AG04449 (cell line): ENCODE measurements at regions of chr1 and their contacts with region 1.

Region 1: GRCh38 chr1:150072959-150073358 is 5.4 kb downstream of the VPS45 start:
- DNase-seq: no peak
- H3K4me3 ChIP-seq: no peak overlapping the region
- CTCF ChIP-seq: no peak

Region 2: GRCh38 chr1:149899460-149900293 is 173.3 kb before region 1 on chr1 and contains the start of gene BOLA1:
- CTCF ChIA-PET with region 1: no interaction called
- POLR2A ChIA-PET with region 1: no interaction called
- DNase-seq: no peak
- H3K4me3 ChIP-seq: peak within 1 kb of the TSS; percentile 66
- CTCF ChIP-seq: no peak

Region 3: GRCh38 chr1:149978547-149979023 is 94.4 kb before region 1 on chr1:
- CTCF ChIA-PET with region 1: no interaction called
- POLR2A ChIA-PET with region 1: no interaction called
- DNase-seq: no peak
- H3K4me3 ChIP-seq: no peak overlapping the region
- CTCF ChIP-seq: no peak

Region 4: GRCh38 chr1:150092180-150092791 is 19.3 kb after region 1 on chr1:
- CTCF ChIA-PET with region 1: interaction called, 11 read pairs
- POLR2A ChIA-PET with region 1: interaction called, 3 read pairs
- DNase-seq: no peak
- H3K4me3 ChIP-seq: no peak overlapping the region
- CTCF ChIP-seq: no peak

Region 5: DNA sequence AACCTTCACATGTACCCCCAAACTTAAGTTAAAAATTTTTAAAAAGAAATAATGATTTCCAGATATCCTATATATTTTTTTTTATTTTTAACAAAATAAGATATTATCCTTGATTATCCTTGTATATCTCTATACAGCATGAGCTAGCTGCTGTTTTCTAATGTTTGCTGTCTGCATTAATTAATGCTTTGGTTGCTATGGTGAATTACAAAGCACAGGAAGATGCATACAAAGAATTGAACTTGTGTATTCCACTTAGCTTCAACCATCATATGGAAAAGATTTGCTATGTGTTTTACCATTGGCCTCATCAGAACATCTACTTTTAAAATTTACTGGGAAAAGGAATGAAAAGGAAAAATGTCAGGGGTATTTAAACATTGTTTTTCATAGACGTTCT is 30.0 kb after region 1 on chr1:
- CTCF ChIA-PET with region 1: interaction called, 12 read pairs
- POLR2A ChIA-PET with region 1: no interaction called
- DNase-seq: no peak
- H3K4me3 ChIP-seq: no peak overlapping the region
- CTCF ChIP-seq: no peak

Region 6: GRCh38 chr1:150149271-150150132 is 76.5 kb after region 1 on chr1 and contains the start of gene PLEKHO1:
- CTCF ChIA-PET with region 1: interaction called, 14 read pairs
- POLR2A ChIA-PET with region 1: interaction called, 4 read pairs
- DNase-seq: no peak
- H3K4me3 ChIP-seq: peak within 1 kb of the TSS; percentile 77
- CTCF ChIP-seq: no peak

Region 7: GRCh38 chr1:150162862-150163706 is 90.1 kb after region 1 on chr1:
- CTCF ChIA-PET with region 1: interaction called, 486 read pairs
- POLR2A ChIA-PET with region 1: no interaction called
- DNase-seq: peak; percentile 99
- H3K4me3 ChIP-seq: peak overlapping the region; percentile 29; the same call in 1 of the 2 replicates
- CTCF ChIP-seq: no peak

Region 8: DNA sequence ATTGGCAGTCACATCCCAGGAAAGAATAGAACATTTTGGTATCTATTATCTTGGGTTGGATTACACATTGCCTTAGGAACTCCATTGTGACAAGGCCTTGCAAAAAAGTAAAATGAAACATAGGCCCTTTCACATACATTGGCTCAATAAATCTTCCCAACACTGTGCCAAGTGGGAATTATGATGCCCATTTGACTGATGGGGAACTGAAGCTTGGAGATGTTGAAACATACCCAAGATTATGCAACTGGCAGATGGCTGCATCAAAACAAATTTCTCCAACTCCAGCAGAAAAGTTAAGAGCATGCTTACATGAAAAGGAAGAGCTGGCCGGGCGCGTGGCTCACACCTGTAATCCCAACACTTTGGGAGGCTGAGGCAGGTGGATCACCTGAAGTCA is 103.6 kb after region 1 on chr1:
- CTCF ChIA-PET with region 1: interaction called, 486 read pairs
- POLR2A ChIA-PET with region 1: no interaction called
- DNase-seq: no peak
- H3K4me3 ChIP-seq: no peak overlapping the region
- CTCF ChIP-seq: no peak

Region 9: GRCh38 chr1:150221552-150221951 is 148.6 kb after region 1 on chr1:
- CTCF ChIA-PET with region 1: interaction called, 14 read pairs
- POLR2A ChIA-PET with region 1: no interaction called
- DNase-seq: no peak
- H3K4me3 ChIP-seq: no peak overlapping the region
- CTCF ChIP-seq: peak; percentile 52

Region 10: GRCh38 chr1:150409504-150410362 is 336.8 kb after region 1 on chr1:
- CTCF ChIA-PET with region 1: no interaction called
- POLR2A ChIA-PET with region 1: no interaction called
- DNase-seq: no peak
- H3K4me3 ChIP-seq: no peak overlapping the region
- CTCF ChIP-seq: no peak